HEK293 (cell line): ENCODE measurements at regions of chr21 and their contacts with region 1.

Region 1: DNA sequence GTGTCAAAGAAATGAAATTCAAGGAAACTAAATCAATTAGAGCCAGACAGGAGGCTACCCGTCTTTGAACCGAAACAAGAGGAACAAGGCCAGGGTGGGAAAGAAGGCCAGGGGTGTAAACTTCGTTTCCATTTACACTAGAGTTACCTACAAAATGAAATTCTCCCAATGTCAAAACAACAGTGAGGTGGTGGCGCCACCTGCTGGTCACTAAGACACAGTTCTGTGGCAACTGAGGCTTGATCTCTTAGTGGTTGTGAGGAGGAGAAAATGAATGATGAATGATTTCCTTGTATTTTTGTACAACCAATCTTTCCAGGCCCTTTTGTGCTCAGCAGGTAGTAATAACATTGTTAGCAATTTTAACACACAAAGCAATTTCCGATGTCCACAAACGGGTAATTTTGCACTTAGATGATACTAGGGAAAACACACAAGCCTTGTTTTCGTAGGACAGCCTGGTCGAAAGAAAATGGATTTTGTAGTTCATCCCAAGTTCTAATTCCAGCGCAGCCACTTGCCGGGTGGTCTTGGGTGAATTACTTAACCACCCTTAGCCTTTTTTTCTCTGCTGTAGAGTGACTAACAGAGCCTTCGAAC is 54.8 kb upstream of the SOD1 start:
- H3K4me3 ChIP-seq: no peak overlapping the region
- H3K27ac ChIP-seq: no peak overlapping the region
- H3K4me1 ChIP-seq: no peaks in the 10 kb centered on the region
- CTCF ChIP-seq: peak; percentile 74; the same call in 1 of the 2 replicates

Region 2: GRCh38 chr21:31098576-31099005 is 506.1 kb before region 1 on chr21:
- CTCF ChIA-PET with region 1: interaction called, 13 read pairs
- POLR2A ChIA-PET with region 1: no interaction called
- H3K4me3 ChIP-seq: no peak overlapping the region
- H3K27ac ChIP-seq: no peak overlapping the region
- H3K4me1 ChIP-seq: no peaks in the 10 kb centered on the region
- CTCF ChIP-seq: peak; percentile 71; the same call in 1 of the 2 replicates

Region 3: GRCh38 chr21:31198575-31198974 is 406.1 kb before region 1 on chr21:
- CTCF ChIA-PET with region 1: interaction called, 14 read pairs
- POLR2A ChIA-PET with region 1: no interaction called
- H3K4me3 ChIP-seq: no peak overlapping the region
- H3K27ac ChIP-seq: no peak overlapping the region
- H3K4me1 ChIP-seq: peaks cover 11% of the 10 kb centered on the region; the same call in 1 of the 2 replicates
- CTCF ChIP-seq: no peak

Region 4: GRCh38 chr21:31459453-31459852 is 145.2 kb before region 1 on chr21:
- CTCF ChIA-PET with region 1: interaction called, 14 read pairs
- POLR2A ChIA-PET with region 1: no interaction called
- H3K4me3 ChIP-seq: no peak overlapping the region
- H3K27ac ChIP-seq: no peak overlapping the region
- H3K4me1 ChIP-seq: no peaks in the 10 kb centered on the region; the same call in 1 of the 2 replicates
- CTCF ChIP-seq: peak; percentile 54